Sigmoid colon (tissue), 7 donors: ENCODE measurements at regions of chr5 and their contacts with region 1.

Region 1: GRCh38 chr5:54229041-54229780 is 81.2 kb downstream of the ARL15 start:
- DNase-seq: peak; percentile 86
- H3K4me3 ChIP-seq: no peak overlapping the region
- H3K27ac ChIP-seq: no peak overlapping the region
- H3K4me1 ChIP-seq: peaks cover 0 to 27% (median 9%) of the 10 kb centered on the region in 4 donors
- H3K27me3 ChIP-seq: no peaks in the 10 kb centered on the region
- CTCF ChIP-seq: peak; percentile 54 to 91 (median 86)
- EP300 ChIP-seq: no peak
- POLR2A ChIP-seq: no peak

Region 2: GRCh38 chr5:52948418-52949076 is 1280.7 kb before region 1 on chr5:
- intact Hi-C with region 1: loop called (anchors 10 kb)
- DNase-seq: peak; percentile 66
- H3K4me3 ChIP-seq: no peak overlapping the region
- H3K27ac ChIP-seq: peak overlapping the region; percentile 24 to 79 (median 73)
- H3K4me1 ChIP-seq: peaks cover 0 to 74% (median 57%) of the 10 kb centered on the region in 4 donors
- H3K27me3 ChIP-seq: no peaks in the 10 kb centered on the region
- CTCF ChIP-seq: peak; percentile 48 to 82 (median 74)
- EP300 ChIP-seq: no peak
- POLR2A ChIP-seq: no peak

Region 3: GRCh38 chr5:53109443-53110127 is 1119.6 kb before region 1 on chr5 and contains the start of gene MOCS2:
- intact Hi-C with region 1: loop called (anchors 10 kb)
- DNase-seq: peak; percentile 94
- H3K4me3 ChIP-seq: peak within 1 kb of the TSS; percentile 75 to 84 (median 80)
- H3K27ac ChIP-seq: peak within 1 kb of the TSS; percentile 80 to 90 (median 82)
- H3K4me1 ChIP-seq: peaks cover 0 to 33% (median 22%) of the 10 kb centered on the region in 4 donors
- H3K27me3 ChIP-seq: no peaks in the 10 kb centered on the region
- CTCF ChIP-seq: no peak
- EP300 ChIP-seq: no peak
- POLR2A ChIP-seq: peak; percentile 59 to 62
- total RNA-seq, gene MOCS2: 56.5 to 92.7 (median 80.1) TPM

Region 4: GRCh38 chr5:53170748-53171349 is 1058.4 kb before region 1 on chr5:
- intact Hi-C with region 1: loop called (anchors 5 kb)
- DNase-seq: no peak
- H3K4me3 ChIP-seq: no peak overlapping the region
- H3K27ac ChIP-seq: no peak overlapping the region
- H3K4me1 ChIP-seq: peaks cover 0 to 25% (median 20%) of the 10 kb centered on the region in 4 donors
- H3K27me3 ChIP-seq: no peaks in the 10 kb centered on the region
- CTCF ChIP-seq: peak; percentile 19 to 46 (median 32)
- EP300 ChIP-seq: no peak
- POLR2A ChIP-seq: no peak

Region 5: DNA sequence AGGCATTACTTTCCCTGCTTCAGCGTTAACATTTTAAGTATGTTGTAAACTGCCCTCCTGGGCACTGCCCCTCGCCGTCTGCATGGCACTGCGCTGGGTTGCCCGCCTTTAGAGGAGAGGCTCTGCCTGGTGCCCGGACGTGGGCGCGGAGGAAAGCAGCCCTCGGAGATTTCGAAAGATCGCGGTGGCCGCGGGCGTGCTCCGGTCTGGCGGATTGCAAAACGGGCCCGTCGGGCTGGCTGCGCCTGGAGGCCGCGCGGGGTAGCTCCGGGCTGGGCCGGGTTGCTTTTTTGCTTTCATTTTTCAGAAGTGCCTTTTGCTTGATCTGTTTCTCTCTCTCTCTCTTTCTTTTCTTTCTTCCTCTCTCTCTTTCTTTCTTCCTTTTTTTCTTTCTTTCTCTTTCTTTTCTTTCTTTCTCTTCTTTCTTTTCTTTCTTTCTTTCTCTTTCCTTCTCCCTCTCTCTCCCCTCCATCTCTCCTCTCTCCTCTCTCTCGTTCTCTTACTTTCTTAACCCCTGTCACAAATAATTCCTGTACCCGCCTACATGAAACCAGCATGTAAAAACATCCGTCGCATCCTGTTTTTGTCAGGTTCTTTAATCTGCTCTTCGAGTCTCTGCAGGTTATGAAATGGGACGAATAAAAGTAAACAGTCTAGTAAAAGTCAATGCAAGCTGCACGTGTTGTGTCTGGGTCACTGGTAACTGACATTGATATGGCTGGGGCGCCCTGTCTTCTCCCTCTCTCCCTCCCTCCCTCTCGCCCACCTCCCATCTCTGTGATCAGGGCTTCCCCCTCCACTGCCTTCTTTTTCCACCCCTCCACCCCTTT is 747.1 kb before region 1 on chr5:
- intact Hi-C with region 1: loop called (anchors 5 kb)
- DNase-seq: peak; percentile 89
- H3K4me3 ChIP-seq: peak overlapping the region; percentile 34 to 81 (median 62)
- H3K27ac ChIP-seq: peak overlapping the region; percentile 69 to 84 (median 72)
- H3K4me1 ChIP-seq: peaks cover 0 to 30% (median 22%) of the 10 kb centered on the region in 4 donors
- H3K27me3 ChIP-seq: no peaks in the 10 kb centered on the region
- CTCF ChIP-seq: peak in 3 of 4 experiments; percentile 21 to 50 (median 32)
- EP300 ChIP-seq: no peak
- POLR2A ChIP-seq: no peak

Region 6: GRCh38 chr5:53560506-53561191 is 668.6 kb before region 1 on chr5 and contains the start of gene NDUFS4:
- intact Hi-C with region 1: loop called (anchors 5 kb)
- DNase-seq: peak; percentile 90
- H3K4me3 ChIP-seq: peak within 1 kb of the TSS; percentile 73 to 86 (median 83)
- H3K27ac ChIP-seq: peak within 1 kb of the TSS; percentile 84 to 89 (median 87)
- H3K4me1 ChIP-seq: peaks cover 0 to 40% (median 28%) of the 10 kb centered on the region in 4 donors
- H3K27me3 ChIP-seq: no peaks in the 10 kb centered on the region
- CTCF ChIP-seq: no peak
- EP300 ChIP-seq: no peak
- POLR2A ChIP-seq: peak; percentile 21 to 59
- total RNA-seq, gene NDUFS4: 106 to 179 (median 129) TPM